ENCODE measurements at regions of chr1 and their contacts with region 1.

Region 1: GRCh38 chr1:31182352-31182751 is 57.3 kb downstream of the NKAIN1 start:
- DNase-seq: peak; percentile 25 to 92 (median 50)

Region 2: GRCh38 chr1:31239653-31240241 is 57.4 kb after region 1 on chr1 and contains the start of gene NKAIN1:
- intact Hi-C with region 1: loop called (anchors 5 kb)
- DNase-seq: peak in 6 of 10 donors; percentile 17 to 91 (median 38)

Region 3: DNA sequence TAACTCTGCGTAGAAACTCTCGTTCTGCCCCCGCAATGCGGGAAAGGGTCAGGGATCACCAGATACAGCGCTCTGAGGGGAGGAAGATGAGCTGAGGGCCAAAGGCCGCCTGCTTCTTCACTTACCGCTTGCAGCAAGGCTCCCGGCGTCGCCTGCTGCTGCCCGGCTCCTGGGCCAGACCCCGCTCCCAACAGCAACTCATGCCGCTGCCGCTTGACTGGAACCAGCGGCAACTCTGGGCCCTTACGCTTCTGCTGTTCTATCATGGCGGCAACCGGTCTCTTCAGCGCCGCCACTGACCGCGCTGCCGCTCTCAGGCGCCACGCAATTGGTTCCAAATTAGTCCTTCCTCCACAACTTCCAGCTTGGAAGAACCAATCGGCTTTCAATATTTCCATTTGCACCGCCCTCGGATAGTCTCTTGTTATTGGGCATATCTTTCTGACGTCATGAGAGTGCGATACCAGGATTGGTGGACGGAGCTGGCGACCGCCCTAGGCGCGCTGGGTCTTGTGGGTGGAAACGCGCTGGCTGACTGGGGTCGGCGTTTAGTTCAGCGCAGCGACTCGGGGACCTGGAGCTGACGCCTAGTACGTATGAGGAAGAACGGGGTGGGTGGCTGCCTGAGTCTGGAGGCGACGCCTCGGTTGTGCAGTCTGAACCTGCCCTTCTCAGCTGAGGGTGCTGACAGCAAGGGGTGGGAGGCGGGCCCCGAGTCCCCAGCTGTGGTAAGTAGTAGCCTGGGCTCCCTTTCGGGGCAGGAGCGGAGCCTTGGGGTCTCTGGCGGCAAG is 114.3 kb after region 1 on chr1 and contains the starts of genes SNRNP40 and ZCCHC17:
- intact Hi-C with region 1: loop called (anchors 2 kb)
- DNase-seq: peak; percentile 82 to 99 (median 93)

Region 4: GRCh38 chr1:31335007-31335406 is 152.7 kb after region 1 on chr1:
- intact Hi-C with region 1: loop called (anchors 1 kb)
- DNase-seq: peak in 1 of 10 donors; percentile 11

Region 5: DNA sequence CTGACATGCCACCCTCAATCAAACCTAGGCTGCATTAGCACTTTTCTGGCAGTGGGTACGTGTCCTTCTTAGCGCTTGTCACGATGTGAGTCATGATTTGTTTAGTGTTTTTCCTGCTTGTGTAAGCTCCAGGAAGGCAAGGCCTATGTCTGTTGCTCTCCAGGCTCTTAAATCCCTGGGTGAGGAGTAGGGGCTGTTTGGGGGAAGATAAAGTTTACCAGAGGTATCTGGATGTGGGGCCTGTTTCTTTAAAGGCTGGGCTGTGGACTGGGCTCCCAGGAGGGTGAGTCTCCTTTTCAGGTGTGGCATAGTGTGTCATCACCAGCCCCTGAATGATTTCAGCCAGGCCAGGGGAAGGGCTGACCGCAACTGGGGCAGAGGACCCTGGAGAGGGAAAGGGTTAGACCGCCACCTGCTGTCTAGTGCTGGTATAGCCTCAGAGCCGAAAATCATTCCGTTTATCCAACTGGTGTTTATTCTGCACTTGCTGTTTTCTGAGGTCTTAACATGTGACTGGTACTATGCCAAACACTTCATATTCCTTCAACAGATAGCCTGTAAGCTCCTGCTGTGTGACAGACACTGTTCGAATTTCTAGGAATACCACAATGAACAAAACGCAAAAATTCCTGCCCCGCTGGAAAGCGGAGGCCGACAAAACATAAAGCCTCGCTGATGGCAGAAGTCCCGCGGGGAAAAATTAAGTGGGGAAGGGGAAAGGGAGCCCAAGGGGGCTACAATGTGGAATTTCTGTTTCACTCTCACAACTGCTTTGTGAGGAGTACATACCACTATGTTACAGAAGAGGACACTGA is 240.4 kb after region 1 on chr1:
- intact Hi-C with region 1: loop called (anchors 2 kb)
- DNase-seq: peak in 8 of 10 donors; percentile 48 to 91 (median 78)

Region 6: GRCh38 chr1:31548907-31549808 is 366.8 kb after region 1 on chr1:
- intact Hi-C with region 1: loop called (anchors 10 kb)
- DNase-seq: peak; percentile 63 to 96 (median 88)

Measured in posterior cingulate gyrus (tissue), 11 donors.